ENCODE measurements at regions of chr2 and their contacts with region 1.

Region 1: GRCh38 chr2:128894896-128895295 is 576.2 kb upstream of the HS6ST1 start:
- DNase-seq: no peak
- H3K4me3 ChIP-seq: no peak overlapping the region
- H3K4me3 Mint-ChIP-seq: no peak overlapping the region
- H3K27ac Mint-ChIP-seq: no peak overlapping the region
- H3K4me1 ChIP-seq: no peaks in the 10 kb centered on the region
- H3K4me1 Mint-ChIP-seq: no peaks in the 10 kb centered on the region
- H3K27me3 ChIP-seq: no peaks in the 10 kb centered on the region
- H3K27me3 Mint-ChIP-seq: peaks cover 6% of the 10 kb centered on the region
- CTCF ChIP-seq: no peak

Region 2: DNA sequence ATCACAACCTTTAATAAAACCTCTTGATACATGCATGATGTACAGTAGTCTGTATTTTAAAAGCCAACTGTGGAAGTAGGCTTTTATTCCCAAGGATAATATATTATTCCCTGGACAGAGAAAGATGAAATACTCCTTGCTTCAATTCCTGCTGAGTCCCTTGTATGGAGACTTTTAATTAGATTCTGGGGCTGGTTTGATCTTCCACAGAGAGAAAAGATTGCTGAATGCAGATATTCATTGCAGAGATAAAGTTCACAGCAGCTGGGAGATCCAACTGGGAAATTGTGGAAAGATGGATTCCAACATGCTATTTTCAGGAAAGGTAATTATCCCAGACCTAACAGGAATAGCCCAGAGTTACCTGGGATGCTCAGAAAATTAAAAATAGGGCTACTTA is 30.7 kb after region 1 on chr2:
- CTCF ChIA-PET with region 1: no interaction called
- POLR2A ChIA-PET with region 1: no interaction called
- intact Hi-C with region 1: loop called (anchors 1 kb)
- DNase-seq: no peak
- H3K4me3 ChIP-seq: no peak overlapping the region
- H3K4me3 Mint-ChIP-seq: no peak overlapping the region
- H3K27ac Mint-ChIP-seq: no peak overlapping the region
- H3K4me1 ChIP-seq: 0 out of 2 replicates have a peak, but pooled peaks cover 3% of the 10 kb centered on the region
- H3K4me1 Mint-ChIP-seq: peaks cover 7% of the 10 kb centered on the region
- H3K27me3 ChIP-seq: no peaks in the 10 kb centered on the region; the same call in 1 of the 2 replicates
- H3K27me3 Mint-ChIP-seq: peaks cover 3% of the 10 kb centered on the region
- CTCF ChIP-seq: no peak